ENCODE measurements at regions of chr4 and their contacts with region 1.

Region 1: DNA sequence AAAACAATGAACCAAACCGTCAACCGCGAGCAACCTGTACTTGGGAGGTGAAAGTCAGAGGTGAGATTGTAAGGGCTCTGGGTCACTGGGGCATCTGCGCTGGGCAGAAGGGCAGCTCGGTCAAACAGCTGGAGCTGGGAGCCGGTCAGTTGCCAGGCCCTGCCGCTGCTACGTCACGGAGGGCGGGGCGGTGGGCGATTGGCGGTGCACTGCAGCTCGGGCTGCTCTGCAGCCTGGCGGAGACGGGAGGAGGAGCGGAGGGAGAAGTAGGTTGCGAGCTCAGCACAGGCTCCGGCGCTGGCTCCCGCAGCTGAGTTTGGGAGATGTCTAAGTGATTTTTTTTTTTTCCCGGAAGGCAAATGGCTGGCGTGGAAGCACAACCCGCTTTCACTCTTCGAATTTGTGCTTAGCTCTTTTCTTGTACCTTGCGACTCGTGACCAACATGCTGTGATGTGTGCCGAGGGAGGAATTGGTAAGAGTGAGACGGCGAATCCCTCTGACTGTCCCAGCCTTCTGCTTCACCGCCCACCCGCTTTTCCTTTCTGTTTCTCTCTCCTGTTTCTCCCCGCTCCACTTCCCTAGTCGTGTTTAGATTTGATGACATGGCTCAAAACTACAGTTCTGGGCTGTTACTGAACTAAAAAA is at the start of gene ATP10D:
- DNase-seq: peak; percentile 93 to 99 (median 96)

Region 2: DNA sequence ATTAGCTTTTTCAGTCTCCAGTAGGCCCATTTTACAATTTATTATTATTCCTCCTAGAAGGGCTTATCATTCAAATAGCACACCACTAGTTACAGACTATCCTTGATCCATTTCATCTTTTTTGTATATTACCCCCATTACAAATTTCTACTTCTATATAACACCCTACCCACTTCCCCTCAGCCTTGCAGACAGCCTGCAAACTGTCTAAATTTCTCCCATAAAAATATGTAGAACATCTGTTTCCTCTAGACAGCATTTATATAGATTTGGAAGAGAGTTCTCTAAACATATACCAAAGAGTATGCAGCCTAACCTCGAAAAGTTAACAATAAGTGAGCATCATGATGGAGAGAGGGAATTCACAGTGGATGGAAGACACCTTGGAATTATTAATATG is 52.4 kb before region 1 on chr4:
- intact Hi-C with region 1: no loop called
- DNase-seq: no peak

Region 3: DNA sequence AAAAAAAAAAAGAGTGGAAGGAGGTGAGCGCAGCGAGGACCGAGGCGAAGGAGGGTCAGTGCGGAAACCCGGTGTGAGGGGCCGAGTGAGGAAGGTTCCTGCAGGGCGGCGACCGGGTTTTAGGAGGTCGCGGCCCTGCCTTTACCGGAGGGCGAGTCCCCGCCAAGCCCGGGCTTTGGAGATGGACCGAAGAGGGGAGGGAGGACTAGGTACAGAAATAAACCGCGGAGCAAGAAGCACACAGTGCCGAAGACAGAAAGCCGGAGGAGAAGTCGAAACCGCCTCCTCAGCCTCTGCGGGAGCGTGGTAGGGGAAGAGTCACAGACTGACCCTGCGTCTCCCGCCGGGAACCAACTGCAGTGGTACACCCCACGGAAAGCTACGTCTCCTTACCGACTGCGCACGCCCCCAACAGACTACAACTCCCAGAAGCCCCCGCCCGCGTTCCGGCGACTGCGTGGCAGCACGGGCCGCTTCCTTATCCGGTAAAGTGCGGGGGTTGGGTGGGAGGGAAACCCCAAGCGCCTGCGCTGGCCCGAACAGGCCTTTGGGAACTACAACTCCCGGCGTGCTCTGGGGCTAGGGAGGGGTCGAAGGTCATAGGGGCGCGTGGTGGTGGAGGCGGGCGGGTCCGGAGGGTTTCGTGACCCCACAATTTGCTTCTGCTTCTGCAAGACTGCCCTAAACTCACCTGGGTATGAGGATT is 429.2 kb after region 1 on chr4 and contains the start of gene NFXL1:
- intact Hi-C with region 1: loop called (anchors 10 kb)
- DNase-seq: peak; percentile 95 to 100 (median 97)